ENCODE measurements at regions of chr11 and their contacts with region 1.

Region 1: GRCh38 chr11:4539603-4540219 is 5.3 kb upstream of the OR52M1 start:
- DNase-seq: peak; percentile 71
- ATAC-seq: peak; percentile 89
- H3K4me3 Mint-ChIP-seq: no peak overlapping the region
- H3K27ac Mint-ChIP-seq: no peak overlapping the region
- H3K4me1 Mint-ChIP-seq: no peaks in the 10 kb centered on the region
- H3K27me3 Mint-ChIP-seq: peaks cover 4% of the 10 kb centered on the region

Region 2: DNA sequence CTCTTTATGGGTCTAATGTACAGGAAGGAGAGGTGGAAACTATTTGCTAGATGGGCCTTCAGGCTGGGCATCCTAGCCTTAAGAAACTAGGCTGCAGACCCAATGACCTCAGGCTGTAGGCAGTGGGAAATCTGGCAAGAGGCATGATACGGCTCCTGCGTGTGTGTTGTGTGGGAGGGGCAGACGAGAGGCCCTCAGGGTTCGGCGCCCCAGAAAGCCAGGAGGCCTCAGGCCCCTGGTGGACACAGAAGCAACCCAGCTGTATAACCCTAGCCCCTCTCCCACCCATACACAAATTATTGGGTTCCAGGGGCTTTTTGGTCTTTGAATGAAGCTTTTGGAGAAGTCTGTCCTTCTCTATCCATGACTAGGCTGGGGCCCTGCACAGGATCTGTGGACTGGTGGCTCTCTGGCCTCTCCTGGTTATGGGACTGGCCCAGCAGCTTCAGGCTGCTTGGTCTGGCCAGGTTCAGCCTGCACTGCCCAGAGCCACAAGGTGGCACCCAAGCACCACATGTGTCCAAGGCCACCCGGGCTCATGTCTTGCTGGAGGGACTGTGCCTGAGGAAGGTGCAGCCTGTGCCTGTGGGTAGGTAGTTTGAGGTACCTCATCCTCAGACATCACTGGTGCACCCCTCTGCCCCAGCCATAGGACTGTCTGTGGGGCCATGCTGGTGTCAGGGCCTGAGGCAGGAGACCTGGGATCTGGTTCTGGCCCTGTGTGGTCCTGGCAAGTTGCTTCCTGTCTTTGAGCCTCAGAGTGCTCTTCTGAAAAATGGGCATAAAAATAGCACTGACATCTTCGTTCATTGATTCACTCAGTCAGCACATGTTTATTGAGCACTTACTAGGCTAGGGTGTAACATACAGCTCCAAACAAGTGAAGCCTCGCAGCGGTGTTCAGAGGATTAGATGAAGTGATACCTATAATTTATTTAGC is 357.7 kb before region 1 on chr11:
- CTCF ChIA-PET with region 1: interaction called, 36 read pairs
- POLR2A ChIA-PET with region 1: no interaction called
- intact Hi-C with region 1: loop called (anchors 1 kb)
- DNase-seq: peak; percentile 73
- ATAC-seq: peak; percentile 76
- H3K4me3 Mint-ChIP-seq: no peak overlapping the region
- H3K27ac Mint-ChIP-seq: no peak overlapping the region
- H3K4me1 Mint-ChIP-seq: no peaks in the 10 kb centered on the region
- H3K27me3 Mint-ChIP-seq: peaks cover 2% of the 10 kb centered on the region

Region 3: GRCh38 chr11:4493480-4493818 is 46.3 kb before region 1 on chr11:
- CTCF ChIA-PET with region 1: interaction called, 3 read pairs
- POLR2A ChIA-PET with region 1: no interaction called
- intact Hi-C with region 1: loop called in 1 of 2 experiments (anchors 2 kb)
- DNase-seq: no peak
- ATAC-seq: no peak
- H3K4me3 Mint-ChIP-seq: no peak overlapping the region
- H3K27ac Mint-ChIP-seq: no peak overlapping the region
- H3K4me1 Mint-ChIP-seq: peaks cover 10% of the 10 kb centered on the region
- H3K27me3 Mint-ChIP-seq: peaks cover 14% of the 10 kb centered on the region

Measured in activated CD4-positive, alpha-beta T cell treated with anti-CD3 and anti-CD28 coated beads for 36 hours (primary cell).